ENCODE measurements at regions of chr7 and their contacts with region 1.

Region 1: GRCh38 chr7:130758429-130759056 is 24.5 kb upstream of the KLF14 start:
- DNase-seq: no peak
- ATAC-seq: no peak
- H3K4me3 Mint-ChIP-seq: no peak overlapping the region
- H3K27ac Mint-ChIP-seq: no peak overlapping the region
- H3K4me1 Mint-ChIP-seq: no peaks in the 10 kb centered on the region
- H3K27me3 Mint-ChIP-seq: peaks cover 2% of the 10 kb centered on the region

Region 2: GRCh38 chr7:130063036-130063435 is 695.5 kb before region 1 on chr7:
- CTCF ChIA-PET with region 1: interaction called, 6 read pairs
- POLR2A ChIA-PET with region 1: no interaction called
- intact Hi-C with region 1: loop called in 1 of 2 experiments (anchors 2 kb)
- DNase-seq: peak; percentile 89
- ATAC-seq: peak; percentile 74
- H3K4me3 Mint-ChIP-seq: no peak overlapping the region
- H3K27ac Mint-ChIP-seq: no peak overlapping the region
- H3K4me1 Mint-ChIP-seq: no peaks in the 10 kb centered on the region
- H3K27me3 Mint-ChIP-seq: no peaks in the 10 kb centered on the region

Region 3: GRCh38 chr7:130365511-130366441 is 392.8 kb before region 1 on chr7:
- CTCF ChIA-PET with region 1: no interaction called
- POLR2A ChIA-PET with region 1: no interaction called
- intact Hi-C with region 1: no loop called
- DNase-seq: peak; percentile 57
- ATAC-seq: no peak
- H3K4me3 Mint-ChIP-seq: no peak overlapping the region
- H3K27ac Mint-ChIP-seq: no peak overlapping the region
- H3K4me1 Mint-ChIP-seq: peaks cover 43% of the 10 kb centered on the region
- H3K27me3 Mint-ChIP-seq: no peaks in the 10 kb centered on the region

Region 4: GRCh38 chr7:130486114-130486958 is 272.2 kb before region 1 on chr7:
- CTCF ChIA-PET with region 1: interaction called, 5 read pairs
- POLR2A ChIA-PET with region 1: no interaction called
- intact Hi-C with region 1: loop called (anchors 2 to 10 kb)
- DNase-seq: peak; percentile 77
- ATAC-seq: peak; percentile 82
- H3K4me3 Mint-ChIP-seq: peak overlapping the region; percentile 61
- H3K27ac Mint-ChIP-seq: peak overlapping the region; percentile 43
- H3K4me1 Mint-ChIP-seq: peaks cover 24% of the 10 kb centered on the region
- H3K27me3 Mint-ChIP-seq: peaks cover 43% of the 10 kb centered on the region

Region 5: GRCh38 chr7:130560970-130561369 is 197.6 kb before region 1 on chr7:
- CTCF ChIA-PET with region 1: interaction called, 4 read pairs
- POLR2A ChIA-PET with region 1: no interaction called
- intact Hi-C with region 1: loop called in 1 of 2 experiments (anchors 5 kb)
- DNase-seq: peak; percentile 17
- ATAC-seq: peak; percentile 44
- H3K4me3 Mint-ChIP-seq: no peak overlapping the region
- H3K27ac Mint-ChIP-seq: no peak overlapping the region
- H3K4me1 Mint-ChIP-seq: no peaks in the 10 kb centered on the region
- H3K27me3 Mint-ChIP-seq: no peaks in the 10 kb centered on the region

Region 6: DNA sequence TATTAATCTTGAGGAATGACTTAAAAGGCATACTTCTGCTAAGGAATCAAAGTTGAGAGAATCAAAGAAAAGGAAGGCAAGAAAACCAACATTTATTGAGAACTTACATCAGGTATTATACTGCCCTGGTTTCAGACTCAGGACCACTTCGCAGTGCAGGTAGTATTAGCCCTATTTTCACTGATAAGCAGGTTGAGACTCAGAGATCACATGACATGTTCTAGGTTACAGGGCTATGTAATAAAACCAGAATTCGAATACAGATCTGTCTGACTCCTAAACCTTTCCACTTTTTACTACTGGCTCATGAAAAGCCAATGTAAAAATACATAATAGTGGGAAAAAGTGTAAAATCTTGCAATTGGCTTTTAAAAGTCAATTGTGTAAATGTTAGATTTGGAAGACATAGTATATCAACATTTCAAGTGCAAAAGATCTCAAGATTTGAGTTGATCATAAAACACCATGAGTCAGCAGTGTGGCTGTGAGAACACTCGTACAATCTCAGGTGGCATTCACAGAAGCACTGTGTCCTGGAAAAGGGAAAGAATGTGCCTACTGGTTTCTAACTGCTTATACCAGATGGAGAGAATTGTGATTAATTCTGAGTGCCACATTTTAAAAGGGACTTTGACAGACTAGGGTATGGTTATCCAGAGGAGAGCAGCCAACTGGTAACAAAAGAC is 373.3 kb after region 1 on chr7:
- CTCF ChIA-PET with region 1: no interaction called
- POLR2A ChIA-PET with region 1: no interaction called
- intact Hi-C with region 1: no loop called
- DNase-seq: no peak
- ATAC-seq: no peak
- H3K4me3 Mint-ChIP-seq: no peak overlapping the region
- H3K27ac Mint-ChIP-seq: no peak overlapping the region
- H3K4me1 Mint-ChIP-seq: peaks cover 3% of the 10 kb centered on the region
- H3K27me3 Mint-ChIP-seq: no peaks in the 10 kb centered on the region